SK-N-SH (cell line): ENCODE measurements at regions of chr2 and their contacts with region 1.

Region 1: DNA sequence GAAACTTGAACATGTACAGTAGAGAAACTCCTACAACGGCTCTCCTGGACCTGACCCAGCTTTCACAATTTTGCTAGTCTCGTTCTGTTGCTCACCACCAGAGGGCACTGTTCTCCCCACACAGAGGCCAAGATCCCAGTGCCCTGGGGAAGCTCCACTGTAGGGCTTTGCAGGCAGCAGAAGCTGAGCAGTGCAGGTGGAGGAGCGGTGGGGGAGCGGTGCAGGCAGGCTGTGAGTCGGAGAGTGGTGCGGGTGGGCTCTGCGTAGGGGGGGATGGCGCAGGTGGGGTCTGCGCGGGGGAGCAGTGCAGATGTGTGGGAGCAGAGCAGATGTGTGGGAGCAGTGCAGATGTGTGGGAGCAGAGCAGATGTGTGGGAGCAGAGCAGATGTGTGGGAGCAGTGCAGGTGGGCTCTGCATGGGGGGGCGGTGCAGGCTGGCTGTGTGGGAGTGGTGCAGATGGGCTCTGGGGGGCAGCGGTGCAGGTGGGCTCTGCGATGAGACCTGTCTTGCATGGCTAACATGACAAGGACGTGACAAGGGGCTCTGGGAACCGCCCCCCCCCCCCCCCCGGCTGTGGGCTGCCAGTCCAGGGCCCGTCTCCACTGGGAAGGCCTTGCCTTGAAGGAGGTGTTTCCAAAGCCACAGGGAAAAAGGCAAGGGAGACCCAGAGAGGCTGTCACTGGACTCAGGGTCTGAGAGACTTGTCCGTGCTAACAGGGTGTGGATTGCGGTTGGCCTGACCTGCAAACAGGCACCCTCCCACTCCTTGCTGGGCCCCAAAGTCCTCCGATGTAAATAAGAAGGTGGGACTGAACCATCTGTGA is 7.3 kb downstream of the CYS1 start:
- DNase-seq: peak; percentile 97
- H3K4me3 ChIP-seq: no peak overlapping the region; a peak in 1 of 4 replicates
- H3K27ac ChIP-seq: no peak overlapping the region
- H3K4me1 ChIP-seq: peaks cover 0 to 2% of the 10 kb centered on the region in 2 experiments; a peak in 1 of 4 replicates
- H3K27me3 ChIP-seq: peaks cover 17% of the 10 kb centered on the region; the same call in 1 of the 2 replicates
- CTCF ChIP-seq: peak; percentile 96
- EP300 ChIP-seq: no peak
- RAD21 ChIP-seq: peak; percentile 91

Region 2: DNA sequence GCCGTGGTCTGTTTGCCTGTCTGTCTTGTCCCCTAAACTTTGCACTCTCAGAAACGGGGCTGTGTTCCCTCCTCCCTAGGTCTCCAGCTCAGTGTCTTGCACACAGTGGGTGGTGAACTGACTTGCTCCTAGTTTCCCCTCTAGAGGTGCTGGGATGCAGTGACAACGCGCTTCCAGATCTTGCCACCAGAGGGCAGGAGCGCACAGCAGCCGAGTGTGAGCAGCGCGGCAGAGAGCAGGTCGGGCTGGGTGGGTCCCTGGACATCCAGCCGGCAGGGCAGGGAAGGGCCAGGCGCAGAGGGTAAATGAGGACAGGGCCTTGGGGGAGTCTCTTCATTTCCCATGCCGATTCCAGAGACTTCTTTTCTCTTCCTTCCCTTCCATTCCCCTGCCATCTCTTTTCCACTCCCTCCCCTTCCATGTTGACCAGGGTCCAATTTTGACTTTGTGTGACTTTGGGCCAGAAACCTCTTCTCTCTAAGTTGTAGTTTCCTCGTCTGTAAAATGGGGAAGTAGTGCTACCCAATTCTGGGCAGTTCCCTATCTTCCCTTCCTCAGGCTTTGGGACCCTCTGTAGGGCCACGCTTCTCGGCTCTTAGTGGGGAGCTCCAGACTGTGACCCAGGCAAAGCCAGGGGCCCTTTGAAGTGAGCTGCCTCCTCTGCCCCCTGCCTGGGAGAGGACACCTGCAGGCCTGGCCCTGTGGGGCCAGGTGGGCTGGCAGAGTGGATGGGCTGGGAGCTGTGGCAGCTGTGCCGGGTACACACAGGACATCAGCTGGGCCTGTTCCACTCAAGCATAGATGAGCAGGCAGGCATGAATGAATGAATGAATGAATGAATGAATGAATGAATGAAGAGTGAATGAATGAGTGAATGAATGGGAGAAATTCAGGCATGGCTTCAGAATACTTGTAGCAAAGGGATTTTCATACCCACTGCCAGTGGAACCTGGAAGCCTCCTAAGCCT is 272.9 kb before region 1 on chr2:
- CTCF ChIA-PET with region 1: interaction called, 14 read pairs
- POLR2A ChIA-PET with region 1: no interaction called
- DNase-seq: peak; percentile 98
- H3K4me3 ChIP-seq: no peak overlapping the region; a peak in 1 of 4 replicates
- H3K27ac ChIP-seq: no peak overlapping the region
- H3K4me1 ChIP-seq: peaks cover 8 to 15% of the 10 kb centered on the region in 2 experiments; a peak in 3 of 4 replicates
- H3K27me3 ChIP-seq: no peaks in the 10 kb centered on the region
- CTCF ChIP-seq: peak; percentile 99
- EP300 ChIP-seq: no peak
- RAD21 ChIP-seq: peak; percentile 96

Region 3: DNA sequence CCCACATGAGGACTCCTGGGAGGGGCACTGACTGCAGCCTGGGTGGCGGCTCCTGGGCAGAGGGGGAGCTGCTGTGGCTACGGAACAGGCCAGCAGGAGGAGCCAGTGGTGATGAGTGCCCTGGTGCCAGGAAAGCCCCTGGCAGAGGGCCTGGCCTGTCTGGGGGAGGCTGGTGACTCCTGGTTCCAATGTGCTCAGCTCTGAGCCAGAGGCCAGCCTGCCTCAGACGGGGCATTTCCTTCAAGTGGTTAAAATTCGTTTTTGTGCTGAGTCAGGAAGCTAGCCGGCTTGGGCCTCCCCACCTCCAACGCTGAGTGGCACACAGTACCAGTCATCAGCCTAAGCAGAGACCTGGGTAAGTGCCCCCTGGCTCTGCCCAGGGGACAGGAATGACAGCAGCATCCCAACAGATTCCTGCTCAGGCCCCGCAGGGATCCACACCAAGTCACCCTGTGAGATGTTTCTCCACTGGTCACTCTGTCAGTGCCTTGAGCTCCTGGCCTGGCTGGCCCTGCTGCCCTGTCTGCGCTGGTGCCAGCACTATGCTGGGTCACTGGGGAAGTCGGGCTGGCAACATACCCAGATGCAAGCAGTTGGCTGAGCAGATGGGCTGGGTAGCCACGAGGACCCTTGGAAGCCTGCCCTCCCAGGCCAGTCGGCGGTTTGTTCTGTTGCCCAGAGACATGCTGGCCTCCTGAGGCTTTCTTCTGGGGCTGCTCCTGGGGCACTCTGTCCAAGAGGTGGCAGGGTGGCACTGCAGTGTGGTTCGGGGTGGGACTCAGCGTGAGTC is 36.6 kb before region 1 on chr2:
- CTCF ChIA-PET with region 1: interaction called, 12 read pairs
- POLR2A ChIA-PET with region 1: no interaction called
- DNase-seq: peak; percentile 87
- H3K4me3 ChIP-seq: no peak overlapping the region
- H3K27ac ChIP-seq: peak overlapping the region; percentile 24 to 64; a peak in 2 of 4 replicates
- H3K4me1 ChIP-seq: peaks cover 8 to 24% of the 10 kb centered on the region in 2 experiments; a peak in 2 of 4 replicates
- H3K27me3 ChIP-seq: no peaks in the 10 kb centered on the region
- CTCF ChIP-seq: peak; percentile 73
- EP300 ChIP-seq: no peak
- RAD21 ChIP-seq: peak; percentile 50

Region 4: GRCh38 chr2:10097352-10098148 is 24.7 kb after region 1 on chr2:
- CTCF ChIA-PET with region 1: interaction called, 946 read pairs
- POLR2A ChIA-PET with region 1: interaction called, 5 read pairs
- DNase-seq: peak; percentile 91
- H3K4me3 ChIP-seq: no peak overlapping the region
- H3K27ac ChIP-seq: no peak overlapping the region
- H3K4me1 ChIP-seq: peaks cover 0 to 13% of the 10 kb centered on the region in 2 experiments; a peak in 1 of 4 replicates
- H3K27me3 ChIP-seq: no peaks in the 10 kb centered on the region
- CTCF ChIP-seq: peak; percentile 96
- EP300 ChIP-seq: no peak
- RAD21 ChIP-seq: peak; percentile 83

Region 5: GRCh38 chr2:10141736-10142642 is 69.1 kb after region 1 on chr2:
- CTCF ChIA-PET with region 1: interaction called, 26 read pairs
- POLR2A ChIA-PET with region 1: no interaction called
- DNase-seq: peak; percentile 88
- H3K4me3 ChIP-seq: no peak overlapping the region
- H3K27ac ChIP-seq: no peak overlapping the region
- H3K4me1 ChIP-seq: peaks cover 0 to 2% of the 10 kb centered on the region in 2 experiments; a peak in 1 of 4 replicates
- H3K27me3 ChIP-seq: no peaks in the 10 kb centered on the region
- CTCF ChIP-seq: peak; percentile 65
- EP300 ChIP-seq: no peak
- RAD21 ChIP-seq: peak; percentile 74

Region 6: DNA sequence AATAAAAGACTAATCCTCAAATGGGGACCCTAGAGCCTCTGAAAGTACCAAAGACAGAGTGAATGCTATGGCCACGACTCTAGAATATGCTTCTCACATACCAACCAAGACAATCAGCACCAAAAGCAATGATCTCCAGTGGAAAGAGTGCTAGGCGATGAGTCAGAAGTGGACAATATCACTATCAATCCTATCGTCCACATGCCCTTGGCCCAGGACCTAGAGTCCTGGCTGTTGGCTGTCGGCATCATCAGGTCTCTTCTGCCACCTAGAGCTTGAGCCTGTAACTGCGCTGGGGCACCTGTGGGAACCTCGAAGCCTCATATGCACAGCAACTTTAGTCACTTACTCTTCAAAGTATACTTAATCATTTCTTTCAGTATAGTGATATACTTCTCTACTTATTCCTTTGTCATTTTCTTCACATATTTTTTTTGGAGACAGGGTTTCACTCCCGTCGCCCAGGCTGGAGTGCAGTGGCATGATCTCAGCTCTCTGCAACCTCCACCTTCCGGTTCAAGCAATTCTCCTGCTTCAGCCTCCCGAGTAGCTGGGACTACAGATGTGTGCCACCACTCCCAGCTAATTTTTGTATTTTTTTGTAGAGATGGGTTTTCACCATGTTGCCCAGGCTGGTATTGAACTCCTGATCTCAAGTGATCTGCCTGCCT is 587.2 kb after region 1 on chr2:
- CTCF ChIA-PET with region 1: interaction called, 11 read pairs
- POLR2A ChIA-PET with region 1: no interaction called
- DNase-seq: peak; percentile 70
- H3K4me3 ChIP-seq: no peak overlapping the region
- H3K27ac ChIP-seq: peak overlapping the region in 1 of 2 experiments; percentile 68; a peak in 2 of 4 replicates
- H3K4me1 ChIP-seq: 0 out of 4 replicates have a peak, but pooled peaks cover 0 to 8% of the 10 kb centered on the region in 2 experiments
- H3K27me3 ChIP-seq: no peaks in the 10 kb centered on the region
- CTCF ChIP-seq: peak; percentile 91
- EP300 ChIP-seq: peak in 1 of 2 experiments; percentile 21; a peak in 1 of 4 replicates
- RAD21 ChIP-seq: peak; percentile 85